Activated T-helper 1 cell treated with anti-CD3 and anti-CD28 coated beads, Interleukin-12 subunit alpha, Interleukin-12 subunit beta, Interleukin-2, Interleukin-4 antibody, amounts not matched to agents 30 ng/mL and 10 ng/mL and 1 ng/mL, durations not matched to agents 14 hours and 24 hours and 36 hours (primary cell): ENCODE measurements at regions of chr14 and their contacts with region 1.

Region 1: GRCh38 chr14:29548948-29549370 is 378.7 kb downstream of the PRKD1 start:
- DNase-seq: no peak
- H3K4me3 Mint-ChIP-seq: no peak overlapping the region
- H3K27ac Mint-ChIP-seq: no peak overlapping the region
- H3K4me1 Mint-ChIP-seq: no peaks in the 10 kb centered on the region
- H3K27me3 Mint-ChIP-seq: no peaks in the 10 kb centered on the region

Region 2: DNA sequence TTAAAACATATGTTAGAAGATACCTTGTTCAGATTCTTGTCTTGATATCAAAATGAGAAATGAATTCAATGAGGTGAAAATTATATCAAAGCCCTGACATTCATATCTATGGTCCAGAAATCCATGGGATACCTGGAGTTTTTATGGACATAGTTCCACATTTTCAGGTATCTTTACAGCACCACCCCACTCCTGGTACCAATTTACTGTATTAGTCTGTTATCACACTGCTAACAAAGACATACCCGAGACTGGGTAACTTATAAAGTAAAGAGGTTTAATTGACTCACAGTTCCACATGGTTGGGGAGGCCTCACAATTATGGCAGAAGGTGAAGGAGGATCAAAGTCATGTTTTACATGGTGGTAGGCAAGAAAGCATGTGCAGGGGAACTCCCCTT is 17.2 kb after region 1 on chr14:
- intact Hi-C with region 1: no loop called
- DNase-seq: no peak
- H3K4me3 Mint-ChIP-seq: no peak overlapping the region
- H3K27ac Mint-ChIP-seq: no peak overlapping the region
- H3K4me1 Mint-ChIP-seq: no peaks in the 10 kb centered on the region
- H3K27me3 Mint-ChIP-seq: no peaks in the 10 kb centered on the region

Region 3: DNA sequence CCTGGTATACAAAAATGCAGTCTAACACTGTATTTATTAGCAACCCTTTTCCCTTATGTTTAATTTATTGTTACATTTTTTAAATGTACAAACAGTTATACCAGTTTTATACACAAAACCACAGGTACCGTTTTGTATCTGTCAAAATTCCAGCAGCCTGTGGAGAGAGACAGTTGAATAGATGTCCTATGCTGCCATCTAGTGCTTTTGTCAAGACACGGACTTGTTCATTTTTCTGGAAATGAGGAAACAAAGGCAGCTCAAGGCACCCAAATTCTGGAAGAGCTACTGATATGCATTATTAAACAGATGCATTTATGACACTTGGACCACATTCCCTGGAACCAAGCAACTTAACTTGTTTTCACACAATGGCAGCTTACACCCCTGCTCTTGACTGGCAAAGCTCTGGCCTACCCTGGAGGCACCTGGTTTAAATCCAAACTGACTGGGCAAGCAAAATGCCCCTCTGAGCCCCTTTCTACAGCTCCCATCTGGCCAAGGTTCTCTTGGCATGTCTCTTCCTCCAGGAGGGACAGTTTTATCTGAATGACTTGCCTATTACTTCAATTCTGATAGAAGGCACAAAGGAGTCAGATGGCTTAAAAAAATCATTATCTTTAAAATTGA is 665.6 kb after region 1 on chr14:
- intact Hi-C with region 1: loop called (anchors 2 kb)
- DNase-seq: no peak
- H3K4me3 Mint-ChIP-seq: no peak overlapping the region
- H3K27ac Mint-ChIP-seq: no peak overlapping the region
- H3K4me1 Mint-ChIP-seq: no peaks in the 10 kb centered on the region
- H3K27me3 Mint-ChIP-seq: no peaks in the 10 kb centered on the region

Region 4: GRCh38 chr14:30270200-30271161 is 721.5 kb after region 1 on chr14:
- intact Hi-C with region 1: loop called (anchors 5 kb)
- DNase-seq: peak; percentile 35
- H3K4me3 Mint-ChIP-seq: no peak overlapping the region
- H3K27ac Mint-ChIP-seq: no peak overlapping the region
- H3K4me1 Mint-ChIP-seq: no peaks in the 10 kb centered on the region
- H3K27me3 Mint-ChIP-seq: no peaks in the 10 kb centered on the region

Region 5: GRCh38 chr14:30521899-30522736 is 973.2 kb after region 1 on chr14:
- intact Hi-C with region 1: loop called (anchors 5 kb)
- DNase-seq: no peak
- H3K4me3 Mint-ChIP-seq: no peak overlapping the region
- H3K27ac Mint-ChIP-seq: no peak overlapping the region
- H3K4me1 Mint-ChIP-seq: peaks cover 6% of the 10 kb centered on the region
- H3K27me3 Mint-ChIP-seq: peaks cover 2% of the 10 kb centered on the region